BJ (cell line): ENCODE measurements at regions of chr6 and their contacts with region 1.

Region 1: DNA sequence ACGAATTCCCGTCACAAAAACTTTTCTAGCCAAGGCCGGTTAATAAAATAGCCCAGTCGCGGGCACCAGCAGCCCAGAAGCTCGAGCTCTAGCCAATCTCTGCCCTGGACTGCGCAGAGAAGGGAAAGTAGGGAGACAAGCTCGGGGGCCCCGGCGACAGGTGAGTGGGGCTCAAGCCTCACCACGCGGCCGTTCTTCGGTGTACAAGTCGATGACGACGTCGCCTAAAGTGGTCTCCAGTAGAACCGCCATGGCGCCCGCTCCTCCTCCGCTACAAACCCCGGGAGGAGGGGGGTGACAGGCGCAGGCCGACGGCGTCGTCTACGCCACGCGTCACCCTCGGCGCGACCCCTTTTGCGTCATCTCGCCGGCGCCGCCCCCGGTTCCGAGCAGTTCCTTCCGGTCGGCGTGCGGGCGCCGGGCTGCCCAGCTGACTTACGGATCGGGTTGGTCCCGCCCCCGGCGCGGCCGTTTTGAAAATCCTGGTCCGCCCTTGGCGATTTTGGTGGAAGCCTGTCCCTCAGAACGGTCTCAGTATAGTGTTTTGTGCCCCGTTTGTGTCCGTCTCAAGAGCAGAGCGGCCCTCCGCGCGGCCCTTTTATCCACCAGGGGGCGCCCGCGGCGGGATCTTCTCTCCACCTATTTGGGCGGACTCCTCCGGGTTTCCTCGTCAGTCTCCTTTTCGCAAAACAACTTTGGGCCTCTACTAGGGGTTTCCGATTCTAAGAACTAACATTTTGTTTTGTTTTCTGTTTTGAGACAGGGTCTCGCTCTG is at the start of gene PPIL4:
- DNase-seq: peak; percentile 74
- H3K4me3 ChIP-seq: peak within 1 kb of the TSS; percentile 63
- H3K27me3 ChIP-seq: no peaks in the 10 kb centered on the region
- CTCF ChIP-seq: peak; percentile 85
- polyA plus RNA-seq, gene PPIL4: 2.6 and 7.4 TPM in 2 replicates

Region 2: GRCh38 chr6:149560736-149561135 is 14.8 kb after region 1 on chr6:
- CTCF ChIA-PET with region 1: interaction called, 29 read pairs
- POLR2A ChIA-PET with region 1: no interaction called
- DNase-seq: no peak
- H3K4me3 ChIP-seq: no peak overlapping the region
- H3K27me3 ChIP-seq: no peaks in the 10 kb centered on the region
- CTCF ChIP-seq: peak; percentile 49